Activated CD4-positive, alpha-beta memory T cell treated with anti-CD3 and anti-CD28 coated beads, Interleukin-2, amount 10 ng/mL, durations not matched to agents 7 days and 5 days (primary cell): ENCODE measurements at regions of chr3 and their contacts with region 1.

Region 1: GRCh38 chr3:186930641-186931531 is 560 bp downstream of the ST6GAL1 start:
- DNase-seq: peak; percentile 77
- H3K4me3 Mint-ChIP-seq: peak overlapping the region; percentile 84
- H3K27ac Mint-ChIP-seq: peak overlapping the region; percentile 88
- H3K4me1 Mint-ChIP-seq: peaks cover 39% of the 10 kb centered on the region
- H3K27me3 Mint-ChIP-seq: no peaks in the 10 kb centered on the region

Region 2: GRCh38 chr3:186732169-186732766 is 198.6 kb before region 1 on chr3:
- CTCF ChIA-PET with region 1: no interaction called
- POLR2A ChIA-PET with region 1: no interaction called
- DNase-seq: no peak
- H3K4me3 Mint-ChIP-seq: no peak overlapping the region
- H3K27ac Mint-ChIP-seq: no peak overlapping the region
- H3K4me1 Mint-ChIP-seq: no peaks in the 10 kb centered on the region
- H3K27me3 Mint-ChIP-seq: peaks cover 2% of the 10 kb centered on the region

Region 3: DNA sequence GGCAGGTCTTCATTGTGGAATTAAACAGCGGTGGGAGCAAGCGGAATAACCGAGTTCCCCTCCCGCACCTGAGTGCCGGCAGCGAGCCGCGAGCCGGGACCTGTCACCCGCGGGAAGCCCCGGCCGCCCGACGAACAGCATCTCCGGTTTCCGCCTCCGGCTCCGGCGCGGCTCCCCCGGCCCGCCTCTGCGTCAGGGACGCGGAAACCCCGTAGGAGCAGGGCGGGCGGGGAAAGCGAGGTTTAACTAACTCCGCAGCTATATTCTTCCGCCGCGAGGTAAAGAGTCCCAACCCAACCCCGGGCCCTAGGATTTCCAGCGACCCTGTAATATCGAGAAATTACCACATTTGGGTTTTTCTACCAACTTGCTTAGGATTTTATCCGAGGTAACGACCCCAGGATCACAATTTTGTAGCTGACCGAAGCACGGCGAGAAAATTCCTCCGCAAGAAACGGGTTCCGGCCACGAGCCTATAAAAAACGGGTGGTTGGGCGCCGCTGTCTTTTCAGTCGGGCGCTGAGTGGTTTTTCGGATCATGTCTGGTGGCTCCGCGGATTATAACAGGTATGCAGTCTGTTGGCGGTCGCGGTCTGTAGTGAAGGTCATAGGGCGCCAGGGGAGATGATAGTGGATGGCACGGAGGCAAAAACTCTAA is 147.7 kb before region 1 on chr3 and contains the start of gene EIF4A2:
- CTCF ChIA-PET with region 1: interaction called, 3 read pairs
- POLR2A ChIA-PET with region 1: interaction called, 40 read pairs
- DNase-seq: peak; percentile 91
- H3K4me3 Mint-ChIP-seq: peak within 1 kb of the TSS; percentile 99
- H3K27ac Mint-ChIP-seq: peak within 1 kb of the TSS; percentile 100
- H3K4me1 Mint-ChIP-seq: peaks cover 40% of the 10 kb centered on the region
- H3K27me3 Mint-ChIP-seq: no peaks in the 10 kb centered on the region
- total RNA-seq, gene EIF4A2: 385 to 388 TPM

Region 4: DNA sequence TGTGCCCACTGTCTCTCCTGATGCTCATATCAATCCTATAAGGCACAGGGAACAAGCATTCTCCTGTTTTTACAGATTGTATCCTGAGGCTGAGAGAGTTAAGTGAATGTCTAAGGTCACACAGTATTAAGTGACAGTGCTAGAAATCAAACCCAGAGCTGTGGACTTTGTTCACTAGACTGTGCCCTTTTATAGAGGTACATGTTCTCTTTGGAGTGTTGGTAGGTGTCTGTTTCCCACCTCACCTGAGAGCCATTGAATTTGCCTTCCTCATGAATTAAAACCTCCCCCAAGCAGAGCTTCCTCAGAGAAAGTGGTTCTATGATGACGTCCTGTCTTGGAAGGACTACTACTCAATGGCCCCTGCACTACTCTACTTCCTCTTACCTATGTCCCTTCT is 75.9 kb before region 1 on chr3:
- CTCF ChIA-PET with region 1: interaction called, 55 read pairs
- POLR2A ChIA-PET with region 1: interaction called, 50 read pairs
- DNase-seq: no peak
- H3K4me3 Mint-ChIP-seq: no peak overlapping the region
- H3K27ac Mint-ChIP-seq: no peak overlapping the region
- H3K4me1 Mint-ChIP-seq: peaks cover 15% of the 10 kb centered on the region
- H3K27me3 Mint-ChIP-seq: no peaks in the 10 kb centered on the region

Region 5: GRCh38 chr3:186915806-186916796 is 14.8 kb before region 1 on chr3:
- CTCF ChIA-PET with region 1: interaction called, 8 read pairs
- POLR2A ChIA-PET with region 1: interaction called, 72 read pairs
- DNase-seq: peak; percentile 25
- H3K4me3 Mint-ChIP-seq: no peak overlapping the region
- H3K27ac Mint-ChIP-seq: no peak overlapping the region
- H3K4me1 Mint-ChIP-seq: peaks cover 36% of the 10 kb centered on the region
- H3K27me3 Mint-ChIP-seq: no peaks in the 10 kb centered on the region

Region 6: DNA sequence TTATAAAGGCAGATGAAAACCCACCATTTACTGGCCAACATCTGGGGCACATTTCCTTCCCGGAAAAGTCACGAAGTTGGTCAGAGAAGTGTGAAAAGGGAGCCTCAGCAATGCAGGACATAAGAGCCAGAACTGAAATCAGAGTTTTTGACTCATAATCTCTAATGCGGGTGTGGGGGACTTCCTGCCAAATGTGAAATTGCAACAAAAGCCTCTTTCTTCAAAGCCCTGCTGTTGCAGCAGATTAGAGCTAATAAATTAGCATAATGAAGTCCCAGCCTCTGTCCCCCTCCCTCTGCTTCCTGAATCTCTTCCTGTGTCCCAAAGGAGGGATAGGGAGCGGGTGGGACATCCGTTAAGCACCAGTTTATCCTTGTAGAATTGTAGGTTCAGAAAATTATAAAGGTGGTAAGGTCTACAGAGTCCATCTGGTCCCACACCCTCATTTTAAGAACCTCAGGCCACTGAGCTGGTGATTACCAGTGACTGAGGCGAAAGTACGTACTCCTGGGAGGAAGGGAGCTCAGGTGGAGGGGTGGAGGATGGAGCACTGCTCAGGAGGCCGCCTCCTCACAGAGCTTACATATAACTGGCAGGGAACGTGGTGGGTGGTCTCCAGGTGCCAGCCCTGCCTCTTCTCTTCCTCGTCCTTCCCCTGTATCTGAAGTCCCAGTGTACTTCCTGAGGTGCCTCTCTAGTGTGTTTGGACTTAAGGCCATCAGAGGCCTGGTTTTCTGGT is 34.4 kb after region 1 on chr3:
- CTCF ChIA-PET with region 1: interaction called, 3 read pairs
- POLR2A ChIA-PET with region 1: interaction called, 11 read pairs
- DNase-seq: no peak
- H3K4me3 Mint-ChIP-seq: no peak overlapping the region
- H3K27ac Mint-ChIP-seq: no peak overlapping the region
- H3K4me1 Mint-ChIP-seq: peaks cover 43% of the 10 kb centered on the region
- H3K27me3 Mint-ChIP-seq: no peaks in the 10 kb centered on the region

Region 7: DNA sequence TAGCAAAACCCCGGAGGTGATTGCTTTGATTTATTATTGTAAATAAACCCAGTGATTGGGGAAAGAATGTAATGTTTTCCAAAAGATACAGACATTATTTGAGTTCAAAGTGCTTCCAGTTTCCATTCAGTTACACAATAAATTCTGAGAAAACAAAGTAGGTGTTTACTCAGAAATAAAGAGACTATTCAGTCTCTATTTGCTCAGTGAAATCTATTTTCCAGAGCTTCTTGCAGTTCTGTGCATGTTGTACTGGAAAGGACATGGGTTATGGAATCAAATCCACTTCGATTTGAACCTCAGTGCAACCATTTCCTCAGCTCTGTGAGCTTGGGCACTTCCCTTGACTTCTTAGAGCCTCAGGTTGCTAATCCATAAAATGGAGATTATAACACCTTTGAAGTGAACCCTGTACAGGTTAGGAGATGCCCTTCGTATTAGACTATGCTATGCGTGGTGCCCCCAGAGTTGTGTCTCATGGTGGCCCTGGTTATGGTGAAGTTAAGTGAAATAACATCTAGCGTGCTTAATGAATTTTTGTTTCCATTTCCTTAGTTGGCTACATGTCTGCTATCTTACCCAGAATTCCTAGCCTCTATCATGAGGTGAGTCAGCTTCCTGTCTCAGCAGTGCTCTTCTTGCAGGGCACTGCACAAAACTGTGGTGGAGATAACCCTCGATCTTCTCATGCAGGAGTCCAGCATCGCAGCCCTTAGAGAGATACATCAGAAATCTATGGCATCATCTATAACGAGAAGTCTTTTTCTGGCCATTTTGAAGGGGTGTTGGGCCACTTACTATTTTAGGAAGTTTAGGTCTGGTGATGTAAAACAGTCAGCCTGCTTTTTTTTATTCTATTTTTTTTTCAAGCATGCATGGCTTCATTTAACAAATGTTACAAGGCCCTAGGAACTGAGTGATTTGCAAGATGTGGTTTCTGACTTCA is 110.7 kb after region 1 on chr3:
- CTCF ChIA-PET with region 1: interaction called, 5 read pairs
- POLR2A ChIA-PET with region 1: interaction called, 13 read pairs
- DNase-seq: peak; percentile 74
- H3K4me3 Mint-ChIP-seq: peak overlapping the region; percentile 50
- H3K27ac Mint-ChIP-seq: peak overlapping the region; percentile 98
- H3K4me1 Mint-ChIP-seq: peaks cover 80% of the 10 kb centered on the region
- H3K27me3 Mint-ChIP-seq: no peaks in the 10 kb centered on the region

Region 8: DNA sequence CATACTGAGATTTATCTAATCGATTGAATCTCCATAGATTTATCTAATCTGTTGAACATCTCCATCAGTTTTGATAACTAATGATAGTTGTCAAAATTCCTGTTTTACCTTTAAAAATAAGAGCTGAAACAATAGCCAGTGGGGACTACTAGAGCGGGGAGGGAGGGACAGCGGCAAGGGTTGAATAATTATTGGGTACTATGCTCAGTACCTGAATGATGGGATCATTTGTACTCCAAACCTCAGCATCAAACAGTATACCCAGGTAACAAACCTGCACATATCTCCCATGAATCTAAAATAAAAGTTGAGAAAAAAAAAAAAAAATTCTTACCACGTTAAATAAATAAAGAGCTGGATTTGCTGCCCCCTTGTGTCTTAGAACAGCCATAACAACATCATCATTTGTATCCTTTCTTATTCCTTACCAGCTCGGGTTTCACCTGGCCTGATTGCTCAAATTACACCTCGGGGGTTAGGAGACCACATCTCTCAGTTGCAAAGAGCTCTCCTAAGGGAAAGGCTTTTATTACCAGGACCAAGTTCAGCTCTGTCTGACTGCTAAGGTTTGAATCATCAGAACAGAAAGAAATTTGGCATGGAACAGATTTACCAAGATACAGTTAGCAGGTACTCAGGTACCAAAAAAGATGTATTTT is 234.1 kb after region 1 on chr3:
- CTCF ChIA-PET with region 1: interaction called, 18 read pairs
- POLR2A ChIA-PET with region 1: interaction called, 4 read pairs
- DNase-seq: peak; percentile 25
- H3K4me3 Mint-ChIP-seq: no peak overlapping the region
- H3K27ac Mint-ChIP-seq: no peak overlapping the region
- H3K4me1 Mint-ChIP-seq: peaks cover 4% of the 10 kb centered on the region
- H3K27me3 Mint-ChIP-seq: peaks cover 23% of the 10 kb centered on the region